WTC11 (cell line): ENCODE measurements at regions of chr6 and their contacts with region 1.

Region 1: DNA sequence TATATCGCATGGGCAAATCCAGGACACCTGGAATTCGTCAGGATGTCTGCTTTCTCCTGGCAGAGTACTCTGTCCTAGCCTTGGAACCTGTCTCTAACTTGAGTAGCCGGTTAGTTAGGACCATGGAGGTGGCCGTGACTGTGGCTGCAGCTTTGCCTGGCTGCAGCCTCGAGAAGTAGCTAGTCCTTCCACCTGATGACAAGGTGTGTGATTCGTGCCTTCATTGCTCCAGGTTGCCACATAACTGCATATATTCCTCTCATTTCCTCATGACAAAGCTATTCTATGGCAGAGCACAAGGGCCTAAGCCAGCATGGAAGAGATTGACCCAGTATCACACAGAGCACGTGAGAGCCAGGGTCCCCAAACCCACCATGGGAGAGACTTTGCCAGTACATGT is 39.9 kb upstream of the KIF25 start:
- DNase-seq: no peak
- ATAC-seq: no peak
- H3K4me3 Mint-ChIP-seq: no peak overlapping the region
- H3K27ac Mint-ChIP-seq: peak overlapping the region; percentile 78
- H3K4me1 Mint-ChIP-seq: peaks cover 7% of the 10 kb centered on the region
- H3K27me3 Mint-ChIP-seq: no peaks in the 10 kb centered on the region
- CTCF ChIP-seq: no peak

Region 2: DNA sequence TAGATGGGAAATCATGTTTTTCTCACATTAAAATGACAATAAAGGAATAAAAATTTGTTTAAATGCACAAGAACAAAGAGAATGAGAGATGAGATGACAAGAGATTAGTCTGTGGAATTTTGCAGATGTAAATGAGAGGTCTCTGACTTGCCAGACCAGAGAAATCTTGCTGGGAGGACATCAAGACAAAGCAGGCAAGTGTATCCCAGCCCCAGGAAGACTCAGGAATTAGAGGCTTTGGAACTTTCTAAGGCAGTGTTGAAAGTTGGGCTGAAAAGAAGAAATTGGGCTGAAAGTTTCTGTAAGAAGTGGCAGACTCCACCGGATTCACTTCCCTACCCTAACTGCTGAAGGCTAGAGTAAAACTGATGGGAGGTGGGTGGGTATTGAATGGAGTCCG is 76.3 kb before region 1 on chr6:
- CTCF ChIA-PET with region 1: no interaction called
- POLR2A ChIA-PET with region 1: no interaction called
- DNase-seq: no peak
- ATAC-seq: no peak
- H3K4me3 Mint-ChIP-seq: no peak overlapping the region
- H3K27ac Mint-ChIP-seq: peak overlapping the region; percentile 14; the same call in 1 of the 2 replicates
- H3K4me1 Mint-ChIP-seq: peaks cover 29% of the 10 kb centered on the region
- H3K27me3 Mint-ChIP-seq: no peaks in the 10 kb centered on the region
- CTCF ChIP-seq: no peak

Region 3: DNA sequence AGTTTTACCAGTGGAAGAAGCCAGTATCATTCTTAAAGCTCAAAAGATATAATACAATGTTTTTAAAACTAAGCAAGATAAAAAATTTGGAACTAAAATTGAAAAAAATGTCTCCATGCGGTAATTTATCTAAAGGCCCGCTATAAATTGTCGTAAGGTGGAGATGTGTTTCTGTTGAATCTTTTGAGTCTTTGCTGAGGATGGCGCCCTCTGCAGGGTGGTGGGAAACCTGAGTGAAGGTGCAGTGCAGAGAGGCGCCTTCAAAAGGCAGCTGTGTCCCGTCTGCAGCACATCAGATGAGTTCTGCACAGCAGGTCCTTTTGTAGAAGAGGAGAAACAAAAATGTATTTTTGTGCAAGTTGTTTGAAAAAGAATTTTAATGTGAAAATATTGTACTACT is 10.5 kb after region 1 on chr6:
- CTCF ChIA-PET with region 1: interaction called, 10 read pairs
- POLR2A ChIA-PET with region 1: no interaction called
- DNase-seq: peak; percentile 83
- ATAC-seq: peak; percentile 86
- H3K4me3 Mint-ChIP-seq: no peak overlapping the region
- H3K27ac Mint-ChIP-seq: no peak overlapping the region
- H3K4me1 Mint-ChIP-seq: peaks cover 12% of the 10 kb centered on the region
- H3K27me3 Mint-ChIP-seq: no peaks in the 10 kb centered on the region
- CTCF ChIP-seq: peak; percentile 60

Region 4: DNA sequence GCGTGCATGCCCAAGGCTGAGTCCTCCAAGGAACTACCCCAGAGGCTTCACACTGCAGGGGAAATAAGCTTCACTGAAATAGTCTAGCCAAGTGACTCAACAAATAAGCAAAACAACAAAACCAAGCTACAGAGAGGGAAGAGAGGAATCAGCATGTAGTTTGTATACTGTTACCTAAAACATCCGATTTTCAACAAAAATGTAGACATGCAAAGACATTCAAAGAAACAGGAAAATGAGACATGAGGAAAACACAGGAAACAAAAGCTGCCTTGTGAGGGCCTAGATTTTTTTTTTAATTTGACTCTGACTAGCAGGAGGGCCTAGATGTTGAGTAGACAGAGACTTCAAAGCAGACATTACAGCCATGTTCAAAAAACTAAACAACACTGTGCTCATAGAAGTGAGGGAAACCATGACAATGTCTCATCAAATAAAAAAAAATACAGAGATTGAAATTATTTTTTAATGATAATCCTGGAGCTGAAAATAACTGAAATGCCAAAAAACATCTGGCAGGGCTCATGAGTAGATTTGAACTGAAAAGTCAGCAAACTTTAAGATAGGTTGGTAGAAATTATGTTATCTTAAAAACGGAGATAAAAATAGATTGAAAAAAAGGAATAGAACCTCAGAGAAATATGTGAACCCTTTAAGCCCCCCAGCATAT is 23.4 kb after region 1 on chr6:
- CTCF ChIA-PET with region 1: no interaction called
- POLR2A ChIA-PET with region 1: no interaction called
- DNase-seq: no peak
- ATAC-seq: no peak
- H3K4me3 Mint-ChIP-seq: no peak overlapping the region
- H3K27ac Mint-ChIP-seq: no peak overlapping the region
- H3K4me1 Mint-ChIP-seq: peaks cover 7% of the 10 kb centered on the region; the same call in 1 of the 2 replicates
- H3K27me3 Mint-ChIP-seq: no peaks in the 10 kb centered on the region
- CTCF ChIP-seq: no peak